ENCODE measurements at regions of chr7 and their contacts with region 1.

Region 1: GRCh38 chr7:149067876-149068275 is 22.6 kb downstream of the ZNF786 start:
- DNase-seq: no peak
- H3K4me3 ChIP-seq: no peak overlapping the region
- H3K27ac ChIP-seq: no peak overlapping the region
- H3K4me1 ChIP-seq: no peaks in the 10 kb centered on the region
- H3K27me3 ChIP-seq: no peaks in the 10 kb centered on the region
- CTCF ChIP-seq: no peak

Region 2: GRCh38 chr7:149028346-149029109 is 39.3 kb before region 1 on chr7 and contains the start of gene PDIA4:
- intact Hi-C with region 1: loop called (anchors 5 kb)
- DNase-seq: peak; percentile 100
- H3K4me3 ChIP-seq: peak within 1 kb of the TSS; percentile 90
- H3K27ac ChIP-seq: peak within 1 kb of the TSS; percentile 93
- H3K4me1 ChIP-seq: no peaks in the 10 kb centered on the region
- H3K27me3 ChIP-seq: no peaks in the 10 kb centered on the region
- CTCF ChIP-seq: no peak
- total RNA-seq, gene PDIA4: 218 to 485 TPM

Region 3: GRCh38 chr7:149097088-149097487 is 29.2 kb after region 1 on chr7:
- intact Hi-C with region 1: no loop called
- DNase-seq: no peak
- H3K4me3 ChIP-seq: no peak overlapping the region
- H3K27ac ChIP-seq: no peak overlapping the region
- H3K4me1 ChIP-seq: no peaks in the 10 kb centered on the region
- H3K27me3 ChIP-seq: no peaks in the 10 kb centered on the region
- CTCF ChIP-seq: no peak

Region 4: GRCh38 chr7:149161241-149161848 is 93.5 kb after region 1 on chr7:
- intact Hi-C with region 1: no loop called
- DNase-seq: no peak
- H3K4me3 ChIP-seq: no peak overlapping the region
- H3K27ac ChIP-seq: no peak overlapping the region
- H3K4me1 ChIP-seq: no peaks in the 10 kb centered on the region
- H3K27me3 ChIP-seq: no peaks in the 10 kb centered on the region
- CTCF ChIP-seq: no peak